ENCODE measurements at regions of chr7 and their contacts with region 1.

Region 1: DNA sequence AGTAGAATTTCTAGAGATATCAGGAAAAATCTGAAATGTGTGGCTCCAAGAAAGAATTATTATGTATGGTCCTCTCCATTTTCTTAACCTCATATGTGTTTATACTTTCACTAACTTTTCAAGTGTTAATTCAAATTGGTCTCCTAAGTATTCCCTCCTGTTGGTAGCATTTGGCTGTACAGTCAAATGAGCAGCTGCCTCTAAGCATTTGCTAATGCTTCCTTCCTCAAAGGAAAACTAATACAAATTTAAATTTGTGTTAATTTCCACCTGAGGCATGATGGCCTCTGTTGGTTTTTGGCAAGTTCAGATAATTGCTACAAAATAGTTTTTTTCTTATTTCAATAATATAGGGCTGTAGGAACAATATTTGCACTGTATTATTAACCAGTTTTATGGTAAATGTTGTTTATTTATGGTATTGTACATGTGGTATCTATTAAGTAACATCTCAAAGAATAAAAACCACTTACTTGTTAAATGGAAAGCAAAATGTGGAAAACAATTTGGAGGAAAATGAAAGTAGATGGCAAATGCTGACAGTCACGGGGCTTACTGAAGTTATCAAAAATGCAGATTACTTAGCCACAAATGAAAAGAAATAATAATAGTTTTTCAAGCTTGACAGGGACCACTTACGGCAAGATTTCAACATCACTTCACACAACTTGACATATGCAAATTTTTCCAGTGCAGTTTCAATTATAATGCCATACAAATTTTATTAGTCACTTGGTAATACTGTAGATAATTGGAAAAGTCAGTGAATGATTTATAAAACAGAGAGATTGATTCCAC is 299.3 kb upstream of the MEOX2 start:
- DNase-seq: no peak
- ATAC-seq: no peak
- H3K4me3 ChIP-seq: no peak overlapping the region
- H3K27ac ChIP-seq: no peak overlapping the region
- H3K4me1 ChIP-seq: no peaks in the 10 kb centered on the region
- H3K27me3 ChIP-seq: no peaks in the 10 kb centered on the region

Region 2: DNA sequence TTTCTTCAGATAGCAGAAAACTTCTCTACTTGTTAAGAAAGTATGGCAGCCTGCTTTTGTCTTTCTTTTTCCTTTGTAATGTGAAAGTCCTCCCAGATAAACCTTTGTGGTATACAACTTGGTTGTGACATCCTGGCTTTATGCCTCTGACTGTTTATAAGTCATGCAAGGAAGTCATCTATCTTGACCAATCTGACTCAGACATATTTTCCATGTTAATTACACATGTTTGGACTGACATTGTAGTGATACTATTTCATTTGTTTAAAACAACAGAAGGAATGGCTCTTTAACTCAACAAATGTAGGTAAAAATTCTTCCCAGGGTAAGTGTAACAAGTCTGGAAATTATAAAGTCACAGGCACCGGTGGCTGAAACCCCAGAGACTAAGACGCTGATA is 42.3 kb after region 1 on chr7:
- intact Hi-C with region 1: no loop called
- DNase-seq: no peak
- ATAC-seq: no peak
- H3K4me3 ChIP-seq: no peak overlapping the region
- H3K27ac ChIP-seq: peak overlapping the region in 1 of 2 donors; percentile 4
- H3K4me1 ChIP-seq: peaks cover 7 to 14% of the 10 kb centered on the region in 2 donors
- H3K27me3 ChIP-seq: no peaks in the 10 kb centered on the region

Region 3: DNA sequence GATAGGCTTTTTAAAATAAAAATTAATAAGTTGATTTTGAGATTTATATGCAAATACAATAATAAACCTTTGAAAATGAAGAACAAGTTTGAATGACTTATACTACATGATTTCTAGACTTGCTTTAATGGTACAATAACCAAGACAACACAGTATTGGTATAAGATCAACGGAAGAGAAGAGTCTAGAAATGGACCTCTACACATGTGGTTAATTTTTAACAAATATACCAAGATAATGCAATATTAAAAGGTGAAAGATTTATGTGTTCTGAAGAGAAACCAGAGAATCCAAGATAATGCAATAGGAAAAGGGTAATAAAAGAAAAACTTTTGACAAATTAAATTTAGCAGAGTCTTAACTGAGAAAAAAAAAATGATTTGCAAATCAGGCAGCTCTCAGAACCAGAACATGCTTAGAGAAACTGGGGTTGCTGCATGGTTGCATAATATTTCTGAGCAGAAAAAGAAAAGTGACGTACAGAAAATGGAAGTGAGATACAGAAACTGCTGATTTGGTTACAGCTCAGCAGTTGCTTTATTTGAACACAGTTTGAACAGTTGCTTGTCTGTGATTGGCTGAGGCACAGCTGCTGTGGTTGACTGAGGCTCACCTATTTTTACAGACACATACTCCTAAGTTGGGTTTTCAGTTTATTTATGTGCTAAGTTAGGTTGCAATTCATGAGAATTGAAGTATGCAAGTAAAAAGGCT is 69.6 kb after region 1 on chr7:
- intact Hi-C with region 1: loop called in 1 of 2 experiments (anchors 10 kb)
- DNase-seq: no peak
- ATAC-seq: no peak
- H3K4me3 ChIP-seq: no peak overlapping the region
- H3K27ac ChIP-seq: no peak overlapping the region
- H3K4me1 ChIP-seq: no peaks in the 10 kb centered on the region
- H3K27me3 ChIP-seq: no peaks in the 10 kb centered on the region

Measured in aorta (tissue), 5 donors.